Posterior vena cava (tissue), 2 donors: ENCODE measurements at regions of chr9 and their contacts with region 1.

Region 1: GRCh38 chr9:100419166-100419565 is 7.8 kb upstream of the MSANTD3 start:
- DNase-seq: no peak

Region 2: GRCh38 chr9:99112750-99113413 is 1306.3 kb before region 1 on chr9:
- intact Hi-C with region 1: loop called in 1 of 2 experiments (anchors 5 kb)
- DNase-seq: no peak